Sigmoid colon (tissue), 7 donors: ENCODE measurements at regions of chr1 and their contacts with region 1.

Region 1: DNA sequence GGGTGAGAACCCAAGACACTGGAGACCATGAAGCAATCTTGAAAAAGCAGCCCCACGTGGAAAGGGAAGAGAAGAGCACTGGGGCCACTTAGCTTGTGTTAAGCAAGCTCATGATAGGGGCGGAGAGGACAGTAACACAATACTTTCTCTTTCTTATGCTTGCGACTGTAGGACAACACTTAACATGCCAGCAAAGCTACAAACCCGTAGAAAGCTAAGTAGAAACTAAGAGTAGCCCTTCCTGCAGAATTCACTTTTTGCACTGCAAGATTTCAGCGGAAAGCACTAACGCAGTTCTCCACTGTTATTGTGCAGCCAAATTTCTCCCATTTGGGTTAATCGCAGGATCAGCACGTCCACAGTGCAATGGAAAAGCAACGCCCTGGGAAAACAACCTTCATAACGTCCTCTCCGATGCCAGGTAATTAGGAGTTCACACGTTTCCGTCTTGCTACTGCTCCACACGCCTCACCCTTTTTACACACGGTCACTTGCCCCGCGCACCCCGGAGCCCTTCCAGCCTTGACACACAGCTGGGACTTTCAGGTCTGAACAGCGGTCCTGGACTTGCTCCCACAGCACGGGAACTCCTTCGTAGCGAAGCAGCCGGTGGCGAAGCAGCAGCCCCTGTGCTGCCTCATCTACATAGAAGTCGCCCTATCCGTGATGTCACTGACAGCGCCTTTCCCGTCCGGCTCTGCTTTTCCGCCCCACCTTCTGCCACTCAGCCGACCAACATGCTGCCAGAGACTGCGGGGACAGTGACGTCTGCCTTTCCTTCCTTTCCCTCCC is 148.6 kb downstream of the PPIAL4G start:
- DNase-seq: peak; percentile 93
- H3K4me3 ChIP-seq: peak overlapping the region; percentile 36 to 55 (median 43)
- H3K27ac ChIP-seq: peak overlapping the region; percentile 39 to 80 (median 62)
- H3K4me1 ChIP-seq: peaks cover 0 to 18% (median 16%) of the 10 kb centered on the region in 4 donors
- H3K27me3 ChIP-seq: peaks cover 0 to 71% (median 48%) of the 10 kb centered on the region in 3 donors
- CTCF ChIP-seq: no peak
- EP300 ChIP-seq: no peak
- POLR2A ChIP-seq: peak in 1 of 2 donors; percentile 60

Region 2: GRCh38 chr1:148290881-148291280 is 43.7 kb before region 1 on chr1:
- intact Hi-C with region 1: loop called (anchors 5 kb)
- DNase-seq: no peak
- H3K4me3 ChIP-seq: no peak overlapping the region
- H3K27ac ChIP-seq: no peak overlapping the region
- H3K4me1 ChIP-seq: no peaks in the 10 kb centered on the region
- H3K27me3 ChIP-seq: no peaks in the 10 kb centered on the region
- CTCF ChIP-seq: no peak
- EP300 ChIP-seq: no peak
- POLR2A ChIP-seq: no peak